Activated naive CD4-positive, alpha-beta T cell treated with anti-CD3 and anti-CD28 coated beads for 36 hours (primary cell): ENCODE measurements at regions of chr2 and their contacts with region 1.

Region 1: GRCh38 chr2:201049455-201049854 is 22.0 kb downstream of the HYCC2 start:
- DNase-seq: no peak
- H3K4me3 Mint-ChIP-seq: no peak overlapping the region
- H3K27ac Mint-ChIP-seq: no peak overlapping the region
- H3K4me1 Mint-ChIP-seq: peaks cover 10% of the 10 kb centered on the region
- H3K27me3 Mint-ChIP-seq: no peaks in the 10 kb centered on the region

Region 2: GRCh38 chr2:200428951-200429665 is 620.3 kb before region 1 on chr2:
- CTCF ChIA-PET with region 1: no interaction called
- intact Hi-C with region 1: no loop called
- DNase-seq: no peak
- H3K4me3 Mint-ChIP-seq: no peak overlapping the region
- H3K27ac Mint-ChIP-seq: no peak overlapping the region
- H3K4me1 Mint-ChIP-seq: peaks cover 9% of the 10 kb centered on the region
- H3K27me3 Mint-ChIP-seq: no peaks in the 10 kb centered on the region

Region 3: GRCh38 chr2:200993097-200993496 is 56.4 kb before region 1 on chr2:
- CTCF ChIA-PET with region 1: no interaction called
- intact Hi-C with region 1: loop called (anchors 5 kb)
- DNase-seq: no peak
- H3K4me3 Mint-ChIP-seq: no peak overlapping the region
- H3K27ac Mint-ChIP-seq: no peak overlapping the region
- H3K4me1 Mint-ChIP-seq: no peaks in the 10 kb centered on the region
- H3K27me3 Mint-ChIP-seq: no peaks in the 10 kb centered on the region

Region 4: GRCh38 chr2:201007561-201007998 is 41.9 kb before region 1 on chr2:
- CTCF ChIA-PET with region 1: no interaction called
- intact Hi-C with region 1: no loop called
- DNase-seq: no peak
- H3K4me3 Mint-ChIP-seq: no peak overlapping the region
- H3K27ac Mint-ChIP-seq: no peak overlapping the region
- H3K4me1 Mint-ChIP-seq: no peaks in the 10 kb centered on the region
- H3K27me3 Mint-ChIP-seq: no peaks in the 10 kb centered on the region